Cardiac septum (tissue), 1 donor: ENCODE measurements at regions of chr2 and their contacts with region 1.

Region 1: GRCh38 chr2:111897924-111898702 is at the start of gene MERTK:
- DNase-seq: peak; percentile 94
- total RNA-seq, gene MERTK: 5.8 TPM

Region 2: DNA sequence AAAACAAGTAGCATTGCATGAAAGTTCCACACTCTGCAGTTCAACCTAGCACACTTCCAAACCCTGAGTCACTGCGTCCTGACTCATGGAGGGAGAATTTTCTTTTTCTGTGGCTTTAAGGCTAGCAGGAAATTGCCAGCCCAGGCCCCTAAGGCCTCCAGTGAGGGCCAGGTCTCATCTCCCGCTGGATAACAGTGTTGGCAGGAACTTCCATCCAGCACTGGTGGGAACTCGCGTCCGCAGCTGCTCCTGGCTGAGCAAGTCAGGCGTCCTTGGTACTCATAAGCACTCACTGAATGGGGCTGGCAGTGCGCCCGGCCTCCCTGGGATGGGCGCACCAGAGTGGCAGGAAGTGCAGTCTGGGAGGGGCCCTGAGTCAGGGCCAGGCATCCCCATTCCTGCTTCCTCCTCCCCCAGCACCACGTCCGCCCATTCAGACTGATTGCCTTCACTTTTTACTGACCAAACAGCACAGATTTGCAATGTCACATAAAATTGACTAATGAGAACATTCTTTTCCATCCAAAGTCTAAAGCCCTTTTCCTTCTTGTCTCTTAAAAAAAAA is 1796.8 kb before region 1 on chr2:
- intact Hi-C with region 1: no loop called
- DNase-seq: peak; percentile 94

Region 3: GRCh38 chr2:111946294-111947114 is 48.4 kb after region 1 on chr2:
- intact Hi-C with region 1: loop called (anchors 5 kb)
- DNase-seq: no peak

Region 4: DNA sequence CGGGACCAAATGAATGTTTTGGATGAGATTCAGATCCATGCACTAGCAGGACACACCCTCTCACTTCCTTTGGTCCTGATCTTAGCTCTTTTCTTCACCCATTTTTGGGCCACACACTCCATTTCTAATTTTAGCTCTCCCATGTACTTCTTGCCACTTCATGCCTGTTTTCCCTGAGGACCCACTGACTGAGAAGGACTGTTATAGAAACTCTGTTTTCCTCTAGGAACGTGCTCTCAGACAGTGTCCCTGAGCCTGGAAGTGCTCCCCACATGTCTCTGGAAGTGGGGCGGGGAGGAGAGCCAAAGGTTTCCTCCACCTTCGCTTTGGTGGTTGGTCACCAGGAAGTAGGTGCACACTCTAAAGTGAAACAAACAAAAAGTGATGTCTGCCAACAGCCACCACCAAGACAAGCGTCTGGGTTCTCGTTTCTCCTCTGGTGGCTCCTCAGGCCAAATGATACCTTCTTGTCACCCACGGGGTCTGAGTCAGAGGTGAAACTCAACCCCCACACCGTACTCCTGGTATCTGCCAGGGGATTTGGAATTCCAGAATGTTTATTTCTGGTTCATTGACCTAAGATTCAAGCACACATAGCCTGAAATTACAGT is 74.9 kb after region 1 on chr2:
- intact Hi-C with region 1: loop called (anchors 2 kb)
- DNase-seq: no peak

Region 5: GRCh38 chr2:111986116-111986900 is 88.2 kb after region 1 on chr2:
- intact Hi-C with region 1: no loop called
- DNase-seq: no peak

Region 6: GRCh38 chr2:112048887-112049286 is 150.8 kb after region 1 on chr2:
- intact Hi-C with region 1: loop called (anchors 2 kb)
- DNase-seq: no peak

Region 7: DNA sequence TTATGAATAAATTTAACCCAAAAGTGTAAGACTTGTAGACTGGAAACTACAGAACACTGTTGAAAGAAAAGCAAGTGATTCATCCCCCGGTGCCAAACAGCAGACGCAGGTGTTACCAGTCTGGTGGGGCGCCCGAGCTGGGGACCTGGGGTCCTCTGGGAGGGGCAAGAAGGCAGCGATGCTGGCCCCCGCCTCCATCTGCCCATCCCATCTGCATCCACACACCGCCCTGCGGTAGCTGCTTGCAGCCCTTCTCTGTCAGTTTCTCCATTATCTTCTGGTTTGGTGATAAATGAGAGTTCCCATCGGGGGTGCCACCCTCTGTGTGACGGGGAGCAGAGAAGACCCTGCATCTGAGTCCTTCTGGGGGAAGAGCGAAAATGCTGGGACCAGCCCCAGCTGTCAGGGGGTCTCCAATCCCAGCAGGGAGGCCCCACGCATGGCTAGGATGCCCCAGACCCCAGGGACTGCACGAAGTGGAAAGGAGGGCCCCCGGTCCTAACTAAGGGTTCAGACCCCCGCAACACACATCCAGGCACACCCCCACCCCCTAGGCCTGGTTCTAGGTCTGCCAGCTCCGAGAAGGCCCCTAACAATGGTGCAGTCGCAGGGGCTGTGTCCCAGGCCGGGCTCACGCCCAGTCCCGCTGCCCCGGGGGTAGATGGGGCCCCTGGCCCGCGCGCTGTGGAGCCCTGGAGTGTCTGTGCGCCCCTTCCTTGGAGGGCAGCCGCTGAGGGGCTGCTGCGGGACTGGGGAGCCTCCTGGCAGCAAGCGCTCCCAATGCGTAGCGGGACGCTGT is 536.0 kb after region 1 on chr2:
- intact Hi-C with region 1: loop called (anchors 10 kb)
- DNase-seq: no peak